Sigmoid colon (tissue), 7 donors: ENCODE measurements at regions of chr17 and their contacts with region 1.

Region 1: GRCh38 chr17:82775001-82775823 is 23.3 kb downstream of the TBCD start:
- DNase-seq: peak; percentile 81
- H3K4me3 ChIP-seq: peak overlapping the region in 1 of 4 donors; percentile 9
- H3K27ac ChIP-seq: no peak overlapping the region
- H3K4me1 ChIP-seq: peaks cover 0 to 7% (median 2%) of the 10 kb centered on the region in 4 donors
- H3K27me3 ChIP-seq: no peaks in the 10 kb centered on the region
- CTCF ChIP-seq: peak; percentile 61 to 90 (median 80)
- EP300 ChIP-seq: no peak
- POLR2A ChIP-seq: no peak

Region 2: GRCh38 chr17:82668631-82669099 is 106.5 kb before region 1 on chr17:
- intact Hi-C with region 1: loop called (anchors 2 kb)
- DNase-seq: peak; percentile 80
- H3K4me3 ChIP-seq: no peak overlapping the region
- H3K27ac ChIP-seq: peak overlapping the region in 3 of 4 donors; percentile 12 to 33 (median 26)
- H3K4me1 ChIP-seq: peaks cover 0 to 8% (median 7%) of the 10 kb centered on the region in 4 donors
- H3K27me3 ChIP-seq: no peaks in the 10 kb centered on the region
- CTCF ChIP-seq: peak; percentile 25 to 65 (median 37)
- EP300 ChIP-seq: no peak
- POLR2A ChIP-seq: no peak

Region 3: GRCh38 chr17:82679586-82680465 is 95.4 kb before region 1 on chr17:
- intact Hi-C with region 1: no loop called
- DNase-seq: no peak
- H3K4me3 ChIP-seq: no peak overlapping the region
- H3K27ac ChIP-seq: no peak overlapping the region
- H3K4me1 ChIP-seq: no peaks in the 10 kb centered on the region
- H3K27me3 ChIP-seq: no peaks in the 10 kb centered on the region
- CTCF ChIP-seq: no peak
- EP300 ChIP-seq: no peak
- POLR2A ChIP-seq: no peak